Head of caudate nucleus (tissue), 42 donors: ENCODE measurements at regions of chr22 and their contacts with region 1.

Region 1: GRCh38 chr22:45240810-45241631 is at the start of gene KIAA0930:
- DNase-seq: peak in 41 of 42 donors; percentile 53 to 89 (median 80)

Region 2: DNA sequence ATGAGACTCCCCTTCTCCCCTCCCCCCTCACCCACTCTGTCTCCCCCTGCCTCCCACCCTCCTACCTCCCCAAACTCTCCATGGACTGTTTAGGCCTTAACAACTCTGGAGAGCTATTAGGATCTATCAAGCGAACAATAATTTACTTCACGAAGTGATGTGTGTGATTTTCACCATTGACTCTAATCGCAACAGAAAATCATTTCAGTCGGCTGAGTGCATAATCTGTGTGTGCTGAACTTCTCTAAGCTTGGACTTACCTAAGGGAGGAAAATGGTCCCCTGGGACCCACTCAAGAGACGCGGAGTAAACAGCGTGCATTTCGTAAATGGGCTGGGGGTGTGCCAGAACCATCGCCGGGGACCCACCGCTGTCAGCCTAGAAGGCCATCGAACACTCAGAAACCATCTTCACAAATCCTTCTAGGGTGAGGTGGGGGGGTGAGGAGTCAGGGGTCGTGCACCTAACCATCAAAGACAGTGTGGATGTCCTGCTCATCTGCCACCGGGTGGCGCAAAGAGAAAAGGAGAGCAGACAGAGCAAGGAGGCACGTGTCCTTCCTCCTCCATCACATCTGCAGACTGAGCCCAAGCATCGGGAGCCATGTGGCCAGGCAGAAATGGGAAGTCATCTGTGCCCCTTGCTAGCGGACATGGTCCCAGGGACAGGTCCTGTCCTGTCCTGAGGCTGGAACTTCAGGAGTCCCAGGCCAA is 139.3 kb before region 1 on chr22:
- intact Hi-C with region 1: loop called (anchors 10 kb)
- DNase-seq: peak in 39 of 42 donors; percentile 19 to 85 (median 60)

Region 3: GRCh38 chr22:45376703-45377102 is 135.7 kb after region 1 on chr22:
- intact Hi-C with region 1: no loop called
- DNase-seq: peak in 2 of 42 donors; percentile 5 to 8